ENCODE measurements at regions of chr17 and their contacts with region 1.

Region 1: GRCh38 chr17:5097101-5097834 is 14.4 kb downstream of the ZNF232 start:
- DNase-seq: no peak
- H3K4me3 Mint-ChIP-seq: no peak overlapping the region
- H3K27ac Mint-ChIP-seq: no peak overlapping the region
- H3K4me1 Mint-ChIP-seq: peaks cover 5% of the 10 kb centered on the region
- H3K27me3 Mint-ChIP-seq: peaks cover 23% of the 10 kb centered on the region

Region 2: GRCh38 chr17:5155495-5155894 is 58.2 kb after region 1 on chr17:
- CTCF ChIA-PET with region 1: no interaction called
- POLR2A ChIA-PET with region 1: no interaction called
- DNase-seq: no peak
- H3K4me3 Mint-ChIP-seq: no peak overlapping the region
- H3K27ac Mint-ChIP-seq: no peak overlapping the region
- H3K4me1 Mint-ChIP-seq: no peaks in the 10 kb centered on the region
- H3K27me3 Mint-ChIP-seq: peaks cover 24% of the 10 kb centered on the region

Region 3: DNA sequence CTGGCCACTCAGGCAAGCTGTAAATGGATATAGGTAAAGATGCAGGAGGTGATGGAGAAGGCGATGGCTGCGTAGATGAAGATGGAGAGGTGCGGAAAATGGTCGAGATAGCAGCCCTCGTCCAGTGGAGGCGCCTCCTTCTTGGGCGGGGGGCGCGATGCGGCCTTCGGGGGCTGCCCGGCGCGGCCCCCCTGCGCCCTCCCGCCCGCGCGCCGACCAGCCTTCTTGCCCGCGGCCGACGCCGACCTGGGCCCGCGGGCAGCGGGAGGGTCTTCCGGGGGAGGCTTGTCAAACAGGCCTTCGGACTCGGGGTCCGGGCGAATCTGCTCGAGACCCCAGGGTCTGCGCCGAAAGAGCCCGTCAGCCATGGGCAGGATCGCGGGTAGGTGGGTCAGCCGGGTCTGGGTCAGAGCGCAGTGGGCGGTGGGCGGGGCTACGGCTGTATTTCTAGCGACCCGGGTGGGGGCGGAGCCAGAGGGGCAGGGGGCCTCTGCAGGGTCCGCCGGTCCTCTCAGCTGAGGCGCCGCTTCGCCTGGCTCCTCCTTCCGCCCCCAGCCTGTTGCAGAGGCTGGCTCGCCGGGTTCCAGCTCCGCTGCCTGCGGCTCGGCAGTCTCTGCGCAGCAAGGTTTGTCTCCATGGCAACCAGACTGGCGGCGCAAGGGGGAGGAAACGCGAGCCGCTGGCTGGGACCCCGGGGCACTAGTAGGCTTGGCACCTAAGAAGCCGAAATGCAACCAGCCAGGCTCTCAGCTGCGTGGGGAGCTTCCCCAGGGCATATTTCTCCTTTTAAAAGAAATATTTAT is 403.5 kb after region 1 on chr17:
- CTCF ChIA-PET with region 1: no interaction called
- POLR2A ChIA-PET with region 1: interaction called, 13 read pairs
- DNase-seq: peak; percentile 82
- H3K4me3 Mint-ChIP-seq: peak overlapping the region; percentile 82
- H3K27ac Mint-ChIP-seq: peak overlapping the region; percentile 46
- H3K4me1 Mint-ChIP-seq: peaks cover 18% of the 10 kb centered on the region
- H3K27me3 Mint-ChIP-seq: no peaks in the 10 kb centered on the region